CD14-positive monocyte (primary cell): ENCODE measurements at regions of chrX and their contacts with region 1.

Region 1: DNA sequence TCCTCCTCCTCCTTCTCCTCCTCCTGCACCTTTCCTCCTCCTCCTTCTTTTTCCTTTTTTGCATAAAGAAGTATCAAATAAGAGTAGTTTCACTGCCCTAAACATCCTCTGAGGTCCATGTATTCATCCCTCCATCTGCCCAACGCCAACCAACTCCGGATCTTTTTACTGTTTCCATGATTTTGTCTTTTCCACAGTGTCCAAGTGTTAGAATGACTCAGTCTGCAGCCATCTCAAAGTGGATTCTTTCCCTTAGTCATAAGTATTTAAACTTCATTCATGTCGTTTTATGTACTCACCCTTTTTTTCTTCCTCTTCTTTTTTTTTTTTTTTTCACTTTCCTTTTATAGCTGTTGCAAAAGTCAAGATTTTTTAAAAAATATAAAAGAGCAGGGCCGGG is 12.9 kb downstream of the CSF2RA start:
- DNase-seq: peak; percentile 38 to 72 (median 62)
- H3K4me3 ChIP-seq: peak overlapping the region in 1 of 3 experiments; percentile 41
- H3K4me3 Mint-ChIP-seq: peak overlapping the region in 1 of 2 donors; percentile 55
- H3K27ac ChIP-seq: peak overlapping the region; percentile 33 to 73
- H3K27ac Mint-ChIP-seq: peak overlapping the region; percentile 85 to 95 (median 92)
- H3K4me1 ChIP-seq: peaks cover 35 to 56% of the 10 kb centered on the region in 2 donors
- H3K4me1 Mint-ChIP-seq: peaks cover 50% of the 10 kb centered on the region
- H3K27me3 ChIP-seq: no peaks in the 10 kb centered on the region
- H3K27me3 Mint-ChIP-seq: no peaks in the 10 kb centered on the region
- CTCF ChIP-seq: no peak

Region 2: DNA sequence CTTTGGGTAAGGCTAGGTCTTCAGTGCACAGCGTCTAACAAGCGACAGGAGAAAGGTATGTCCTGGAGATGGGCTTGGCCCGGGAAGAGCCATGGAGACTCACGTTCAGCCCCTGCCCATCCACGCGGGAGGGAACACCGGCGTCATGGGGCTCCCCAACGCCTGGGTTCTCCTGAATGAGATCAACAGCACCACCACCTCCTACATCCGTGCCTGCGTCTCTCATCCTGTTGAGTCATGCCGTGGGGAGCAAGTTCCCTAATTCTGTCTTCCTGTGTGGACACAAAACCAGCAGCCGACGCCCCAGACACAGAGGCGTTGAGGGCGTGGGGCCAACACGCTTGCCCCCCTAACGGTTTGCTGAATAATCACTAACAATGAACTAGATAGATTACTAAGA is 35.0 kb after region 1 on chrX:
- intact Hi-C with region 1: loop called in 1 of 2 experiments (anchors 5 kb)
- DNase-seq: peak; percentile 98 to 99 (median 98)
- H3K4me3 ChIP-seq: peak overlapping the region in 1 of 3 experiments; percentile 51
- H3K4me3 Mint-ChIP-seq: peak overlapping the region; percentile 58 to 79
- H3K27ac ChIP-seq: peak overlapping the region; percentile 81 to 90
- H3K27ac Mint-ChIP-seq: peak overlapping the region; percentile 94 to 99 (median 95)
- H3K4me1 ChIP-seq: peaks cover 48 to 57% of the 10 kb centered on the region in 2 donors
- H3K4me1 Mint-ChIP-seq: peaks cover 55% of the 10 kb centered on the region
- H3K27me3 ChIP-seq: no peaks in the 10 kb centered on the region
- H3K27me3 Mint-ChIP-seq: peaks cover 0 to 4% (median 0%) of the 10 kb centered on the region in 3 donors
- CTCF ChIP-seq: no peak